CD14-positive monocyte (primary cell): ENCODE measurements at regions of chr12 and their contacts with region 1.

Region 1: GRCh38 chr12:50572271-50572670 is 67.5 kb downstream of the DIP2B start:
- DNase-seq: peak; percentile 72 to 92 (median 87)
- H3K4me3 ChIP-seq: peak overlapping the region in 1 of 3 experiments; percentile 43
- H3K4me3 Mint-ChIP-seq: peak overlapping the region in 1 of 2 donors; percentile 76
- H3K27ac ChIP-seq: peak overlapping the region in 1 of 2 donors; percentile 56
- H3K27ac Mint-ChIP-seq: peak overlapping the region; percentile 12 to 91 (median 83)
- H3K4me1 ChIP-seq: peaks cover 52 to 79% of the 10 kb centered on the region in 2 donors
- H3K4me1 Mint-ChIP-seq: peaks cover 72% of the 10 kb centered on the region
- H3K27me3 ChIP-seq: no peaks in the 10 kb centered on the region
- H3K27me3 Mint-ChIP-seq: no peaks in the 10 kb centered on the region
- CTCF ChIP-seq: no peak

Region 2: DNA sequence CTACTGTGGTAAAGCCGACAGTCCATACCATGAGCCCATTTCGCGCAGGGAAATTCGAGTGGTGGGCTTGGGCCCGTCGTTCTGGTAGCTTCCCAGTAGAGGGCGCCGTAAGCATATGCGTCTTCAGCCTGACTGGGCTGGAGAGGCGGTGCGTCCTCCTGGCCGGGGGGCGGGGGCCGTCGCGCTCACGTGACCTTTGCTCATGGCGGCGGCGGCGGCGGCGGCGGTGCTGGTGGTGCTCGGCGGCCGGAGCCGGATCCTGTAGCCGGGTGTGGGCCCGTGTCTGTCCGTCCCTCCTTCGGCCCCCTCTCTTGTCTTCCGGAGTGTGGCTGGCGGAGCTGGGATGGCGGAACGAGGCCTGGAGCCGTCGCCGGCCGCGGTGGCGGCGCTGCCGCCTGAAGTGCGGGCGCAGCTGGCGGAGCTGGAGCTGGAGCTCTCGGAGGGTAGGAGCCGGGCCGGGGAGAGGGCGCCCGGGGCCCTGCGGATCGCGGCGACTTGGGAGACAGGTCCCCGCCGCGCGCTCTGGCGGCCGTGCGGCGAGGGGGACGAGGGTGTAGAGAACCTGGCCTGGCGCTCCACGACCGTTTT is 67.4 kb before region 1 on chr12 and contains the start of gene DIP2B:
- intact Hi-C with region 1: loop called in 1 of 2 experiments (anchors 2 kb)
- DNase-seq: peak; percentile 91 to 95 (median 94)
- H3K4me3 ChIP-seq: peak within 1 kb of the TSS; percentile 70 to 95 (median 93)
- H3K4me3 Mint-ChIP-seq: peak within 1 kb of the TSS; percentile 91 to 97
- H3K27ac ChIP-seq: peak within 1 kb of the TSS; percentile 82 to 92
- H3K27ac Mint-ChIP-seq: peak within 1 kb of the TSS; percentile 89 to 96 (median 93)
- H3K4me1 ChIP-seq: peaks cover 43 to 45% of the 10 kb centered on the region in 2 donors
- H3K4me1 Mint-ChIP-seq: peaks cover 44% of the 10 kb centered on the region
- H3K27me3 ChIP-seq: no peaks in the 10 kb centered on the region
- H3K27me3 Mint-ChIP-seq: no peaks in the 10 kb centered on the region
- CTCF ChIP-seq: peak; percentile 90
- polyA plus RNA-seq, gene DIP2B: 3.5 to 12.3 (median 6.5) TPM

Region 3: GRCh38 chr12:50520416-50521207 is 51.7 kb before region 1 on chr12:
- intact Hi-C with region 1: loop called in 1 of 2 experiments (anchors 10 kb)
- DNase-seq: peak in 1 of 3 donors; percentile 39
- H3K4me3 ChIP-seq: peak overlapping the region in 2 of 3 experiments; percentile 0 to 66
- H3K4me3 Mint-ChIP-seq: peak overlapping the region; percentile 61 to 67
- H3K27ac ChIP-seq: peak overlapping the region; percentile 78 to 81
- H3K27ac Mint-ChIP-seq: peak overlapping the region in 6 of 7 donors; percentile 89 to 96 (median 94)
- H3K4me1 ChIP-seq: peaks cover 64 to 69% of the 10 kb centered on the region in 2 donors
- H3K4me1 Mint-ChIP-seq: peaks cover 49% of the 10 kb centered on the region
- H3K27me3 ChIP-seq: no peaks in the 10 kb centered on the region
- H3K27me3 Mint-ChIP-seq: no peaks in the 10 kb centered on the region
- CTCF ChIP-seq: no peak

Region 4: GRCh38 chr12:50533203-50533584 is 39.1 kb before region 1 on chr12:
- intact Hi-C with region 1: loop called (anchors 5 to 10 kb)
- DNase-seq: no peak
- H3K4me3 ChIP-seq: no peak overlapping the region
- H3K4me3 Mint-ChIP-seq: no peak overlapping the region
- H3K27ac ChIP-seq: peak overlapping the region in 1 of 2 donors; percentile 72
- H3K27ac Mint-ChIP-seq: no peak overlapping the region
- H3K4me1 ChIP-seq: peaks cover 62 to 71% of the 10 kb centered on the region in 2 donors
- H3K4me1 Mint-ChIP-seq: peaks cover 35% of the 10 kb centered on the region
- H3K27me3 ChIP-seq: no peaks in the 10 kb centered on the region
- H3K27me3 Mint-ChIP-seq: no peaks in the 10 kb centered on the region
- CTCF ChIP-seq: no peak

Region 5: GRCh38 chr12:50620109-50620977 is 48.1 kb after region 1 on chr12:
- intact Hi-C with region 1: loop called in 1 of 2 experiments (anchors 10 kb)
- DNase-seq: no peak
- H3K4me3 ChIP-seq: no peak overlapping the region
- H3K4me3 Mint-ChIP-seq: no peak overlapping the region
- H3K27ac ChIP-seq: no peak overlapping the region
- H3K27ac Mint-ChIP-seq: peak overlapping the region in 4 of 7 donors; percentile 4 to 56 (median 30)
- H3K4me1 ChIP-seq: peaks cover 10 to 11% of the 10 kb centered on the region in 2 donors
- H3K4me1 Mint-ChIP-seq: peaks cover 30% of the 10 kb centered on the region
- H3K27me3 ChIP-seq: no peaks in the 10 kb centered on the region
- H3K27me3 Mint-ChIP-seq: peaks cover 0 to 2% (median 1%) of the 10 kb centered on the region in 3 donors
- CTCF ChIP-seq: no peak

Region 6: GRCh38 chr12:50786498-50787231 is 214.4 kb after region 1 on chr12:
- intact Hi-C with region 1: no loop called
- DNase-seq: no peak
- H3K4me3 ChIP-seq: no peak overlapping the region
- H3K4me3 Mint-ChIP-seq: no peak overlapping the region
- H3K27ac ChIP-seq: no peak overlapping the region
- H3K27ac Mint-ChIP-seq: peak overlapping the region in 4 of 7 donors; percentile 20 to 61 (median 35)
- H3K4me1 ChIP-seq: no peaks in the 10 kb centered on the region
- H3K4me1 Mint-ChIP-seq: peaks cover 18% of the 10 kb centered on the region
- H3K27me3 ChIP-seq: no peaks in the 10 kb centered on the region
- H3K27me3 Mint-ChIP-seq: no peaks in the 10 kb centered on the region
- CTCF ChIP-seq: no peak